OCI-LY7 (cell line): ENCODE measurements at regions of chr10 and their contacts with region 1.

Region 1: DNA sequence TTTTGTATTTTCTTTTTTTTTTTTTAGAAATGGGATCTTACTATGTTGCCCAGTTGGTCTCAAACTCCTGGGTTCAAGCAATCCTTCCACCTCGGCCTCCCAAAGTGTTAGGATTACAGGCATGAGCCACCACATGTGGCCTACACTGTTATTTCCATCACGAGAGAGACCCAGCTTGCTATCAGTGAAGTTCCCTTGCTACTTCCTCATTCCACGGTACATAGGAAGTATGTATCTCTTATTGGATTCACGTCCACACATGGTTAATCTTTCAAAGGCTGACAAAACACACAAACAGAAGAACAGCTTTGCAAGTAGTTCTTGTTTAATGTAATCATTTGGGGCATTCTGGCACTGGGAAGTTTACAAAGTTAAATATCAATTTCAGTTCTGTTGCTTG is 50.9 kb downstream of the DCLRE1A start:
- DNase-seq: peak; percentile 22
- H3K4me3 ChIP-seq: no peak overlapping the region
- H3K27ac ChIP-seq: no peak overlapping the region
- H3K4me1 ChIP-seq: no peaks in the 10 kb centered on the region
- CTCF ChIP-seq: no peak

Region 2: GRCh38 chr10:113704637-113705343 is 98.2 kb before region 1 on chr10:
- CTCF ChIA-PET with region 1: no interaction called
- POLR2A ChIA-PET with region 1: interaction called, 3 read pairs
- intact Hi-C with region 1: loop called (anchors 5 kb)
- DNase-seq: peak; percentile 54
- H3K4me3 ChIP-seq: no peak overlapping the region
- H3K27ac ChIP-seq: no peak overlapping the region
- H3K4me1 ChIP-seq: no peaks in the 10 kb centered on the region
- CTCF ChIP-seq: peak; percentile 93

Region 3: DNA sequence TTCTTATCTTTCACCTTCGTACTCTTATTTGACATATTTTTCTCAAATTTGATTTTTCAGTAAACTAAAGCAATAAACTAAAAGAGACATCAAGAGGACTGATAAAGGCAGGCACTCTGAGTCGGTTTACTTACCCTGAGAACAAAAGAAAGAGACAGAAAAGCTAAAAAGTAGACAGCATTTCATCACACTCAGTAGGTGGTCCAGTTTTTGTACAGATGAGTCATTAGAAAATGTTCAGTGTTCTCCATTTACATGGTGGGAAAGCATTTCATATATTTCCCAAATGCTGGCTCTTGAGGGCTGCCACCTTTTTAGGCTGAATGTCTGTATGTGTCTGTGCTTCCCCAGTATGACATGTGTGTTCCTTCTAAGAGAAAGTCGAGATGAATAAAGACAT is 104.2 kb after region 1 on chr10:
- CTCF ChIA-PET with region 1: no interaction called
- POLR2A ChIA-PET with region 1: interaction called, 4 read pairs
- intact Hi-C with region 1: loop called (anchors 5 kb)
- DNase-seq: no peak
- H3K4me3 ChIP-seq: no peak overlapping the region
- H3K27ac ChIP-seq: no peak overlapping the region
- H3K4me1 ChIP-seq: no peaks in the 10 kb centered on the region
- CTCF ChIP-seq: no peak

Region 4: DNA sequence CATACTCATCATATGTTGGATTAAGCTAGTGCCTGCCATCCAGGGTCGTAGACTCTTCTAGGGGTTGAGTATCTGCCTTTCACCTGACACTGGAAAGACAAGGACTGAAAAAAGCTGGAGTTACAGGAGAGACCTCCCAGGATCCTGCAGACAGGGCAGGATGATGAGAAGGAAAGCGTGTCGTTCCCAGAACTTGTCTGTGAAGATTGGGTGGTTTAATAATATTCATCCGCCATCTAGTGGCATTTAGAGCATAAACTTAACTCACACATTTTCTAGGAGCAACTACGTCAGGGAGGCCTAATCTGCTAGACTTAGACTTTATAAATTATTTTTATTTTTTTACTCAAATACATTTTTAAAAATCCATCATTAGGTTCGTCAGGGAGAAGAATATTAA is 300.3 kb after region 1 on chr10:
- CTCF ChIA-PET with region 1: interaction called, 7 read pairs
- POLR2A ChIA-PET with region 1: interaction called, 5 read pairs
- intact Hi-C with region 1: loop called (anchors 1 kb)
- DNase-seq: peak; percentile 63
- H3K4me3 ChIP-seq: no peak overlapping the region
- H3K27ac ChIP-seq: no peak overlapping the region
- H3K4me1 ChIP-seq: peaks cover 18% of the 10 kb centered on the region
- CTCF ChIP-seq: peak; percentile 87